ENCODE measurements at regions of chr2 and their contacts with region 1.

Region 1: DNA sequence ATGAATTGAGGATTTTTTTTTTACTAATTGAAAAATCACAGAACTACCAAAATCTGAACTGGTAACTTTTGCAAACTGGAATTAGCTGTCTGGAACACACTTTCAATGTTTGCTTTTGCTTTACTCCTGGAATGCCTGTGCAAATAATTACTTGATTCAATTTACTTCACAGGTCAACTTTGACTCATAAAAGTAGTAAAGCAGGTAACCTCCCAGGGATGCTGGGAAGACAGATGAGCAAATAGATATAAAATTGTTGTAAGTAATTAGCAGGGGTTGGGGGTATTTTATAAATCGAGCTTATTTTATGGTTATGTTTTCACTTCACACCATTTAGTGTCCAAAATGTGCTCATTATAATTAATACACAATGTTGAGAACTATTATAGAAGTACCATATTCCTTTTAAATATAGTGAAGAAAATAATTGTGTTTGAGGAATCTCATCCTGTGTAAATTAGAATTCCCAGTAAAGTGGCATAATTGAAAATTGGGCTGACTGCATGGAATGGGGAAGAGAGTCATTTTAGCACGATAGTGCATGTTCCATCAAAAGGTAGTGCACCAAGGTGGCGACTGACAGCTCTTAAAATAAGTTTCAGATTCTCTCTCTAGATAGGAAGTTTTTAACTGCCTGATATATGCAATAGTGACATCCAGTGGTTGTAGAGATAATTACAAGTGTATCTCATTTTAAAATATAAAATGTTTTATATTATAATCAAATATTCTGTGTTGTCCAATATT is 398.1 kb upstream of the HNRNPA3 start:
- DNase-seq: peak in 1 of 2 donors; percentile 61
- ATAC-seq: peak; percentile 73 to 79 (median 76)
- H3K4me3 ChIP-seq: no peak overlapping the region
- H3K4me3 Mint-ChIP-seq: no peak overlapping the region
- H3K27ac ChIP-seq: no peak overlapping the region
- H3K27ac Mint-ChIP-seq: no peak overlapping the region
- H3K4me1 ChIP-seq: no peaks in the 10 kb centered on the region
- H3K4me1 Mint-ChIP-seq: peaks cover 8 to 12% of the 10 kb centered on the region in 2 donors
- H3K27me3 ChIP-seq: no peaks in the 10 kb centered on the region
- H3K27me3 Mint-ChIP-seq: no peaks in the 10 kb centered on the region
- CTCF ChIP-seq: peak; percentile 85

Region 2: DNA sequence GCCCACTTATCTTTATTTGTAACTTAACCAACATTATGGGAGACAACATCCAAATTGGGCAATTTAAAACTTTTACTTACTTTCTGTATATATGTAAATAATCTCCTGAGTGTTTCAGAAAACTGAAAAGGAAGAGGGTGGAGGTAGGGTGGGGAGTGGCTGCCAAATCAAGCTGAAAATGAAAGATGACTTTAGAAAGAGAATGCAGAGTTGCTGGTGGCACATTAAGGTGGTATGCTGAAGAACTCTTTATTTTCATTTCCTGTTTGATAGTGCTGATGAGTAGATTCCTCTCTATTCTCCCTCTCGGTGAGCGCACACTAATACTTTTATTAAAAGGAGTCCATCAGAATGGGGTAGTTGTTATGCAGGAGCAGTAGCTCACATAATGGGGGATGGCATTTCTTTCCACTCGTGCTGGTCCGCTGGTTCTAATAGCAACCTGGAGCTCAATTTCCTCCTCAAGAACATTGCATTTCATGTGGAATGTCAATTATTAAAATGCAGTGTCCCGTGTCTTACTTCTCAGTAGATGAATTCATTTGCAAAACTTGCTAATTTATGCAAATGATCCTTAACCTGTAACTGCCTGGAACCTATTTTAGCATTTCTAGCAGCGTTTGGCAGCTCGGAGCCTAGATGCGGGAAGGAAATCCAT is 68.8 kb before region 1 on chr2:
- intact Hi-C with region 1: loop called (anchors 1 kb)
- DNase-seq: no peak
- ATAC-seq: no peak
- H3K4me3 ChIP-seq: no peak overlapping the region
- H3K4me3 Mint-ChIP-seq: no peak overlapping the region
- H3K27ac ChIP-seq: no peak overlapping the region
- H3K27ac Mint-ChIP-seq: no peak overlapping the region
- H3K4me1 ChIP-seq: no peaks in the 10 kb centered on the region
- H3K4me1 Mint-ChIP-seq: peaks cover 14% of the 10 kb centered on the region in 2 donors
- H3K27me3 ChIP-seq: no peaks in the 10 kb centered on the region
- H3K27me3 Mint-ChIP-seq: peaks cover 5 to 13% of the 10 kb centered on the region in 2 donors
- CTCF ChIP-seq: no peak

Region 3: DNA sequence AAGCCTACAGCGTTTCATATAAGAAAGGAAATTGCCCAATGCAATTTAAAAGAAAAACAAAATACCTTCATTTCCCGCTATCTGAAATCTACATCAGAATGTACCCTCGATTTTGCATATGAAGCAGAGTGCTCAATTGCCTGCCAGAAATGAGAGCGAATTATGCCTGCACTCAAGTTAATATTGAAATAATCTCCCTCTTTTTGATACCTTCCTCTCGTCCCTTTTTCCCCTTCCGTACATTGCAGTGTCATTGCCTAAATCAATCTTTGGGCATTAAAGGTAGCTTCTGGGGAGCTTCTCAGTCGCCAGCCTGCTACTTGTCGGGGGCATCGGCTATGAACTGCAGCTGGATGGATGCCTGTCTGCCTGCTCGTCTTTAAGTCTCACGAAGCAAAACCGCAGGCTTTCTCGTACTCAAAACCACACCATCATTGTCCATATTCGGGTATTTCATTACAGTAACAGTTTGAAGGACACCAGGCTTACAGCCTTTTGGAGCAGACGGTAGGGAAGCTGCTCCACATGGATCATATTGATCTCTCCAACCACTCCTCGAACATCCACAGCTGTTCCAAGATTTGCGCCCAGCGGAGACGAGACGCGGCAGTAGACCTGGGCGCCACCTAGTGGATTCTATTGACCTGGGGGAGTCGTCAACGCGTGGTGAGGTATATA is 334.1 kb after region 1 on chr2:
- intact Hi-C with region 1: loop called (anchors 10 kb)
- DNase-seq: peak; percentile 53 to 86
- ATAC-seq: peak; percentile 89 to 92 (median 91)
- H3K4me3 ChIP-seq: peak overlapping the region; percentile 29
- H3K4me3 Mint-ChIP-seq: peak overlapping the region; percentile 90
- H3K27ac ChIP-seq: no peak overlapping the region
- H3K27ac Mint-ChIP-seq: peak overlapping the region in 1 of 2 donors; percentile 42
- H3K4me1 ChIP-seq: peaks cover 8% of the 10 kb centered on the region
- H3K4me1 Mint-ChIP-seq: peaks cover 11 to 12% of the 10 kb centered on the region in 2 donors
- H3K27me3 ChIP-seq: peaks cover 26% of the 10 kb centered on the region
- H3K27me3 Mint-ChIP-seq: peaks cover 44 to 54% of the 10 kb centered on the region in 2 donors
- CTCF ChIP-seq: peak; percentile 92

Measured in natural killer cell (primary cell).